Posterior vena cava (tissue), 2 donors: ENCODE measurements at regions of chr5 and their contacts with region 1.

Region 1: DNA sequence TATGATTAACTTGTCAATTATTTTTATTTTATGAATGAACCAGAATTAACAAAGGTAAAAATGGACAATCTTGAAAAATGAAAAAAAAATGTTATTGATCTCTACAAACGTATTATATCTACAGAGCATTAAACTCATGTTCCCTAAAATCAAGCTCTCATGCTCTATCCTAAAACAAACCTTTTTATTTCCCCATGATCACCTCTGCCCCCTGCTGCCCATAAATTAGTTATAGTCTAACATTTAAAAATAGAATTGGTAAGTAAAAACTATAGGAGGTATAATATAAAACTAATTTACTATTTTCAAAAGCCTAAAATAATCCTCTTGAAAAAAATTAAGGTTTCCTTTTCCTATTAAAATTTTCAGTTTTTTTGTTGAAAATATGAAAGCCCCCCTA is 168.0 kb upstream of the POU5F2 start:
- DNase-seq: no peak

Region 2: GRCh38 chr5:92613546-92613945 is 1295.8 kb before region 1 on chr5:
- intact Hi-C with region 1: loop called in 1 of 2 experiments (anchors 5 kb)
- DNase-seq: no peak